HAP-1 (cell line): ENCODE measurements at regions of chr13 and their contacts with region 1.

Region 1: DNA sequence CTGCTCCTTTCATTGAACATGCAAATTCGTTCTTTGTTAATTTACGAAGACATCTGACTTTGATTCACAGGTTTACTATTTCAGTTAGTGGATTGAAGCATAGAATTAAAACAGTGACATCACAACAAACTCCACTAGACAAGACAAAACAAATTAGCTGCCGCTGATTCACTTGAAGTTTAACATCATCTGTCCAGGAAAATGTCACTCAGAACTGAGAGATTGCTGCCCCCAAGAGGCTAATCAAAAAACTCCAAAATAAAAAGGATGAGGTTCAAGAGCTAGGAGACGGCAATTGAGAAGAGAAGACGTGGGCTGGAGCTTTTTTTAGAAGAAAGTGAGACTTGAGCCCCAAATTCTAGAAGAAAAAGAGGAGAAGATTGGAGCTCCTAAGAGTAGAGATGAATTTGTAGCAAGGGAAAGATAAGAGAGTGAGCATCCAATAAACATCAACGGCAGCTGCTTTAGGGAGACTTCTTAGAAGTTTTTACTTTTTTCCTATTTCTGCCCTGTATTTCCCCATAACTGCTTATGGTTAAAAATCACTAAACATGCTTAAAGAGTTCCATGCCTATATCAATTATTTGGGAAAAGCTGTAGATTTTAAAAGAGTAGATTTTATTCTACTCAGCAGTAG is 40.8 kb upstream of the TPP2 start:
- DNase-seq: peak; percentile 15 to 45
- H3K4me3 ChIP-seq: no peak overlapping the region
- H3K4me1 ChIP-seq: no peaks in the 10 kb centered on the region
- H3K27me3 ChIP-seq: peaks cover 15% of the 10 kb centered on the region

Region 2: DNA sequence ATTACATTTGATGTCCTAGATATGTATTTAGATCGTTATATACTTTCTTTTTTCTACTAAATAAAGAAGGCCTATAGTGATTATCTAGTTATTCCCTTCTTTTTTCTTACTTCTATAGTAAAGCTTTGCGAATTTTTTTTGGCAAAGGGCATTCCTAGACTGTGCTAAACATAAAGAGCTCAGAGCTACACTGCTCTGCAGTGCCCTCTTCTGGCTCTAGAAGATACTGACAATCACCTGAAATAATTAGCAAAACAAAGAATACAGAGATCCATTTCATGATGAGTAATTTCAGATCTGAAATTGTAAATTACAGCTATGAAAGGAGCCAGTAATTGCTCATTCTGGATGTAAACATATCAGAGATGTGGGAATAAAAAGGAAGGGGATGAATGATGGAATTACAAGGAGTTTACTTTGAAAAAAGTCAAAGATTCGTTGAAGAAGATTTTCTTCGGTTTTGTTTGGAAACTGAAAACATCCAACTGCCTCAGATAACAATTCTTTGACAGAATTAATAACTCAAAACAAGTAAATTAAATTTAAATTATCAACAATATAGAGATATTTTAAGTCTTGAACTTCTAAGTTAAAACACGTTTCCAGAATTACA is 1428.2 kb before region 1 on chr13:
- in situ Hi-C with region 1: loop called (anchors 25 kb)
- DNase-seq: peak; percentile 39 to 63
- H3K4me3 ChIP-seq: no peak overlapping the region
- H3K4me1 ChIP-seq: no peaks in the 10 kb centered on the region
- H3K27me3 ChIP-seq: peaks cover 20% of the 10 kb centered on the region

Region 3: DNA sequence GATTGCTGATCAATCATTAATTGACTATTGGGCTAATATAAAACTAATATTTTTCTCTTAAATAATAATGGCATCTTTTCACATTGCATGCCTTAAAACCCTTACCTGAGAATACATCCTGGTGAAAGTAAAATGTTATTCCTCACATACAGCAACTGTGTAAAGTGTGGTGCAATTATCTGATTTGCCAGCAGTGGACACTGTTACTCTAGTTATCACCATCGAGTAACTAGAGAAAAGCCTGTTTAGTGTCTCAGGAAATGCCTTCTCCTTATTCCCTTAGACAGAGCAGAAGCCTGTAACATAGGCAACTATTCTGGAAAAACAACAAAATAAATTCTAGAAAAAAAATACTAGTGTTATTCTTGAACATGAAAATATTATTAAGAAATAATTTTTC is 614.0 kb before region 1 on chr13:
- in situ Hi-C with region 1: loop called (anchors 25 kb)
- DNase-seq: peak; percentile 4 to 16
- H3K4me3 ChIP-seq: no peak overlapping the region
- H3K4me1 ChIP-seq: no peaks in the 10 kb centered on the region
- H3K27me3 ChIP-seq: no peaks in the 10 kb centered on the region